ENCODE measurements at regions of chr22 and their contacts with region 1.

Region 1: DNA sequence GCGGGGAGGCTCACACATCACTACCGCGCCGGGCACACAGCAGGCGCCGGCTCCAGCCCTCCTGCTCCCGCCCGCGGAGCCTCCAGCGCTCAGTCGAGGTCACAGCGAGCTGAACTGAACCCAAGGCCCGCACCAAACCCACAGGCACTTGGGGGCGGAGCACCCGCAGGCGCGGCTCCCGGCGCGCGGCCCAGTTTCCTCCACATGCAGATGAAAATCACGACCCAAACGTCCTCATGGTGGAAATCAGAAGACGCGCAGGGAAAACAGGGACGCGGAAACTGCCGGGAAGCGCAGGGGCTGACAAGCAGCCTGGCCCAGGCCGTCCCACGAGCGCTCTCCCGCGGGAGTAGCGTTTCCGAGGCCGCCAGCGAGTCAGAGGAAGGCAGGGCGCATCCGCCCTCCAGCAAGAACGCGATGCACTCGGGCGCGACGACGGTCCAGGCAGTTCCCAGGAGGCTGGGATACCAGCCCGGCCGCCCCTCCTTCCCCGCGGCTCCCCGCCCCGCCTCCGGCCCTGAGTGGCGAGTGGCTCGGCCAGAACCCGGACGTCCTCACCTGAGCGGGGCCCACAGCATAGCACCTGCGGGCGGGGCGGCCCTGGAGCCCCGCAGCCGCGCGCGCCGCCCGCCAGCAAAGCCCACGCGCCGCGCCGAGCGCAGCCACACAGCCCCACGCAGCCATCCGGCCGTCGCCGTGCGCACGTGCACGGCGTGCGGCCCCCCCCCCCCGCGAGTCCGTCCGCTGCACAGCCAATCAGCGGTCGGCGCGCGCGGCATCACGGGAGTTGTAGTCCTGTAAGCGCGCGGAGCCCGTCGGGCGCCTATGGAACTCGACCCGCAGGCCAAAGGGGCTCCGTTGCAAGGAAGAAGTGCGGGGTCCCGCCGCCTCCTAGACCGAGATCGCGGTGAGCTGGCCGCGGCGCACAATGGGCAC is at the start of gene HDHD5:
- DNase-seq: peak; percentile 80 to 94 (median 88)
- H3K4me3 ChIP-seq: peak within 1 kb of the TSS; percentile 71 to 99 (median 91)
- H3K27ac ChIP-seq: peak within 1 kb of the TSS; percentile 29 to 96 (median 88)
- H3K27me3 ChIP-seq: no peaks in the 10 kb centered on the region
- CTCF ChIP-seq: peak in 24 of 56 donors; percentile 4 to 43 (median 15)
- total RNA-seq, gene HDHD5: 13.5 to 28.7 (median 21.8) TPM

Region 2: DNA sequence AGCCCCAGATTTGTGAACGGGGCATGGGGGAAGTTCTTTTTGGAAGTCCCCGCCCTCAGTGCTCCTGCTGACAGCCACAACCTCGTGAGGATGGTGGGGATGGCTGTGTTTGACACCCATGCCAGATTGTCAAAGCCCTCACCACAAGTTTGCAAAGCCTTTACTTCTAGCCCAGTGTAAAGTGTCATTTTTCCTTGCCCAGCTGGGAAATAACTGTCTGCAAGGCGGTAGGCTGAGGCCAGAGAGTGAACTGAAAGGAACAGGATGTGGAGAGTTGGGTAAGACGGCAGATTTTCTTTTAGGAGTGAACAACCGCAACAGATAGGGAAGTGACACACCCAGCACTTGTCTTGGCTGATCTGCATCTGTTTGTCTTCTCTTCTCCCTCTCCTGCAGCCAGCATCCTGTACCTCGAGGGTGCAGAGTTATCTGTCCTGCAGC is 60.4 kb before region 1 on chr22:
- intact Hi-C with region 1: no loop called
- DNase-seq: no peak
- H3K4me3 ChIP-seq: no peak overlapping the region
- H3K27ac ChIP-seq: peak overlapping the region in 5 of 59 donors; percentile 7 to 53 (median 16)
- H3K27me3 ChIP-seq: no peaks in the 10 kb centered on the region
- CTCF ChIP-seq: no peak

Region 3: DNA sequence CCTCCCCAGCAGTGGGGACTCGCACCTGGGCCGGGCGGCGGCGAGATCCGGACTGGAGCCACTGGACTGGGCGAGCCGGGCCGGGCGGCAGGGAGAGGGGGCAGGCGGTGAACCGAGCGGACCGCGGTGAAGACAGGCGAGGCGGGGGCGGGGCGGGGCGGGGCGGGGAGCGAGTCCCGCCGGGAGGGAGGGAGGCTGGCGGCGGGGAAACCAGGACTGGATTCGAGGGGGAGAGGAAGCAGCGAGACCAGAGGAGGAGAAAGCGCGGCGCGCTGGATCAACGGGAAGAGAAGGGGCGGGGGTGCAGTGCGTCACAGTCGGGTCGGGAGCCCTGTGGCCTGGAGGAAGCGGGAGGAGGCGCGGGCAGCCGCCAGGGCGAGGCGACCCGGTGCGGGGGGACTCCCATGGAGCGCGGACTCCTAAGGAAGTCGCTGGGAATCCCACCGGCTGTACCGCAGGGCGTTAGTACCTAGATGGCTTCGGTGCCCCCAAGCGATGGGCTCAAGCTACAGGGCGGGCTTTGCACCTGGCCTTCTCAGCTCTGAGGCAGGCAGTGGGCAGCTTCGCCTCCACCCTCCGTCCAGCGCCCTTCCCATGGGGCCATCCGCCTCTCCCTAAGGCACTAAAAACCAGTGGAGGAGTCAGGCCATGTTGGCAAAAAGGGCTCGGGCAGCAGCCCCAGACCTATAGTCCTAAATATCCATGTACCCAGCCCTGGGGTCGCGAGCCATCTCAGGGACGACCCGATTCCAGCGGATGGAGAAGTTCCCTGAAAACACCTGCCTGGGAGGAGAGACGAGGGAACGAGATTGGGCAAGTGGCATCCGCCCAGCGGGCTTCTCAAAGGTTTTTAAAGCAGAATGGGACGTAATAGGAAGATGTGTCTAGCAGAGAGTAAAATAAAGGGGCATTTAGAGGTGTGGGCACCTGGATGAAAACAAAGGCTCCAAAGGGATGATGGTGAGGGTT is 37.3 kb before region 1 on chr22 and contains the start of gene TMEM121B:
- intact Hi-C with region 1: loop called (anchors 2 to 5 kb)
- DNase-seq: peak; percentile 43 to 89 (median 80)
- H3K4me3 ChIP-seq: peak within 1 kb of the TSS; percentile 52 to 85 (median 68)
- H3K27ac ChIP-seq: peak within 1 kb of the TSS in 55 of 59 donors; percentile 36 to 95 (median 84)
- H3K27me3 ChIP-seq: no peaks in the 10 kb centered on the region
- CTCF ChIP-seq: peak in 1 of 56 donors; percentile 18
- total RNA-seq, gene TMEM121B: 5.0 to 22.9 (median 14.6) TPM

Measured in dorsolateral prefrontal cortex (tissue), 120 donors.